B cell (primary cell): ENCODE measurements at regions of chr9 and their contacts with region 1.

Region 1: DNA sequence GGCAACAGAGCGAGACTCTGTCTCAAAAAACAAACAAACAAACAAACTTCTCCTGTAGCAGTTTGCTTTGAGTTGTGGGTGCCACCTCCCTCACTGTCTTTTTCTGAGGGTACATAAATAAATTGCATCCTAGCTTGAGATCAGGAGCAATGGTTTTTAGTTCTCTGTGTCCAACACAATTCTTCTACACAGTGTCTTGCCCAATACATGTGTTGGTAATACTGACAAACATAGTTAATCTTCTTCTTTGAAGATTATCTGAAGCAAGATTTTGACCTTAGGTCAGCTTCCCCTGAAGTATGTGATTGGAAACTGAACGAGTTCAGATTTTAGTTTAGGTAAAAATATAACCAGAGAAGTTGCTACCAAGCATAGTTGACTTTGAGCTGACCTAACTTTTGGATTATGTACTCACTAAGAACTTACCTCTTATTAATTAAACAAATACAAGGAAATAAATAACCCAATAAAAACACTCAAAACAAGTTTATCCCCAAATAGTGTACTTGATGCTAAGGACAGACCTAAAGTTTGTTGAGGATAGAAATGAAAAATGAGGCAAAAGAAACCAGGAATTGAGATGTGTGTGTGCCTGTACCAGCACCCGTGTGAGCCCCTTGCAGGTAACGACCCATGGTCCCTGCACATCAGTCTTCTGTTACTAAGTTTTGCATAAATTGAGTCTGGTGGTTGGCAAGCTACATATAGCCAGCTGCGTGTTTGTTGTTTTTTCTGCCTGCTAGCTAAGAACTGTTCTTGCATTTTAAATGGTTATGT is 16.2 kb downstream of the TJP2 start:
- DNase-seq: no peak
- ATAC-seq: no peak
- H3K4me3 ChIP-seq: no peak overlapping the region
- H3K4me3 Mint-ChIP-seq: no peak overlapping the region
- H3K27ac ChIP-seq: no peak overlapping the region
- H3K27ac Mint-ChIP-seq: no peak overlapping the region
- H3K4me1 ChIP-seq: no peaks in the 10 kb centered on the region
- H3K4me1 Mint-ChIP-seq: peaks cover 6% of the 10 kb centered on the region
- H3K27me3 ChIP-seq: no peaks in the 10 kb centered on the region
- H3K27me3 Mint-ChIP-seq: no peaks in the 10 kb centered on the region
- CTCF ChIP-seq: no peak

Region 2: GRCh38 chr9:69056191-69056815 is 134.0 kb before region 1 on chr9:
- CTCF ChIA-PET with region 1: interaction called, 101 read pairs
- POLR2A ChIA-PET with region 1: no interaction called
- intact Hi-C with region 1: no loop called
- DNase-seq: no peak
- ATAC-seq: no peak
- H3K4me3 ChIP-seq: no peak overlapping the region
- H3K4me3 Mint-ChIP-seq: no peak overlapping the region
- H3K27ac ChIP-seq: no peak overlapping the region
- H3K27ac Mint-ChIP-seq: no peak overlapping the region
- H3K4me1 ChIP-seq: no peaks in the 10 kb centered on the region
- H3K4me1 Mint-ChIP-seq: no peaks in the 10 kb centered on the region
- H3K27me3 ChIP-seq: no peaks in the 10 kb centered on the region
- H3K27me3 Mint-ChIP-seq: no peaks in the 10 kb centered on the region
- CTCF ChIP-seq: no peak

Region 3: GRCh38 chr9:69204849-69205248 is 14.6 kb after region 1 on chr9:
- CTCF ChIA-PET with region 1: no interaction called
- POLR2A ChIA-PET with region 1: no interaction called
- intact Hi-C with region 1: no loop called
- DNase-seq: no peak
- ATAC-seq: no peak
- H3K4me3 ChIP-seq: no peak overlapping the region
- H3K4me3 Mint-ChIP-seq: no peak overlapping the region
- H3K27ac ChIP-seq: no peak overlapping the region
- H3K27ac Mint-ChIP-seq: no peak overlapping the region
- H3K4me1 ChIP-seq: peaks cover 3 to 6% of the 10 kb centered on the region in 2 donors
- H3K4me1 Mint-ChIP-seq: peaks cover 8% of the 10 kb centered on the region
- H3K27me3 ChIP-seq: no peaks in the 10 kb centered on the region
- H3K27me3 Mint-ChIP-seq: no peaks in the 10 kb centered on the region
- CTCF ChIP-seq: no peak